Activated B cell treated with CpG ODN at 0.5 μM for 24 hours (primary cell): ENCODE measurements at regions of chr10 and their contacts with region 1.

Region 1: DNA sequence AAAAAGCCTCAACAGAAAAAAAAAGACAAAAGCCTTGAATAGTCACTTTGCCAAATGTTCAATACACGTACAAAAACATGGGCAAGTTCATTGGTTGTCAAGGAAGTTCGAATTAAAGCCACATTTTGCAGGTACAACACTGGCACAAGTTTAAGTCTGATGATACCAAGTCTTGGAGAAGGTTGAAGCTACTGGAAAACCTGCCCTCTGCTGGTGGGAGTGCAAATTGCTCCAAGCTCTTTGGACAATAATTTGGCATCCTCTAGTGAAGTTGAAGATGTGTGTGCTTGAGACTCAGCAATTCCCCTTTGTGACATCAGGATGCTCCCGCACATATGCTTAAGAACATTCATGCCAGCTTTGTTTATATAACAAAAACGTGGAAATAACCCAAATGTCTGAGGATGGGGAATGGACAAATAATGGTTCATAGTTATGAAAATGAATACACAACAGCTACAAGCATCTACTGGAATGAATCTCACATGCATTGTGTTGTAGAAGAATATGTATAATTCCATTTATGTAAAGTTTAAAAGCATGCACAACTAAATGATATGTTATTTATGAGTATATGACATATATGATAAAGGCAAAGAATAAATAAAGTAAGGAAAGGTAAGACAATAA is 120.0 kb upstream of the PLPP4 start:
- DNase-seq: peak; percentile 35
- ATAC-seq: no peak
- H3K4me3 Mint-ChIP-seq: no peak overlapping the region
- H3K27ac Mint-ChIP-seq: no peak overlapping the region
- H3K4me1 Mint-ChIP-seq: no peaks in the 10 kb centered on the region
- H3K27me3 Mint-ChIP-seq: no peaks in the 10 kb centered on the region
- CTCF ChIP-seq: peak; percentile 93

Region 2: DNA sequence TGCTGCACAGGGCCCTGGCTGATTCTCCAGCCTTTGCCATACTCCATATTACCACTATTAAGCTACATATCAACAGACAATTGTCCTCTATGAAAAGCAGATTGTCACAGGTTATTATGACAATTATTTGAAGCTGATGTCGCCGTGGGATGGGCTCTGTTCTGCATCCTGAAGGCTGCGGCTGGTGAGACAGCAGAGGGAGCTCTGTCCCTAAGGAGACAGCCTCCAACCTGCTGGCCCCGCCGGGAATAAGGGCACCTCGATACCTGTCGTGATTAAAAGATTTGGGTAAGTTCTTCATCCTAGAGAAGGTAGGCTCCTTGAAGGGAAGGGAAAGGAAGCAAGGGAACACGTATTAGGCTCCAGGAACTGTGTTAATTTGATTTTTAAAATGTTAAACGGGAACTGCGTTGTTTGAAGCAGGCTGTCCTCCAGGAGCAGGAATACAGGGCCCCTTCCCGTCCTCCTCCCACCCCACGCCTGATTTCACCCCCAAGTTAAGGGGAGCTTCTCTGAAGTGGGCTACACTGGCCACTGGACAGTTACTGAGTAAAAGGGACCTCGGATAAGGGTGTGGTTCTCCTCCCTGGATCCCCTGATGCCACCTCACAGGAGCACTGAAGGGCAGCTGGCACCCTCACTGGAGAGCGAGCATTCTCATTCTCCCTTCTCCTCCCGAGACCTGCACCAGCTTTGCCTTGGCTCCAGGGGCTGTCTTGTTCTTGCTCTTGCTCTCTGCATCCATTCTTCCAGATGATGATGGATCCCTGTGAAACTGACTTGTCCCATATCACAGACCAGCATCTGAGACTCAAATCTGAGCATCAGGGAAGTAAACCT is 728.5 kb before region 1 on chr10:
- CTCF ChIA-PET with region 1: no interaction called
- POLR2A ChIA-PET with region 1: no interaction called
- intact Hi-C with region 1: loop called (anchors 2 kb)
- DNase-seq: no peak
- ATAC-seq: no peak
- H3K4me3 Mint-ChIP-seq: no peak overlapping the region
- H3K27ac Mint-ChIP-seq: no peak overlapping the region
- H3K4me1 Mint-ChIP-seq: peaks cover 3% of the 10 kb centered on the region
- H3K27me3 Mint-ChIP-seq: peaks cover 2% of the 10 kb centered on the region
- CTCF ChIP-seq: no peak

Region 3: GRCh38 chr10:119933179-119933578 is 403.8 kb before region 1 on chr10:
- CTCF ChIA-PET with region 1: no interaction called
- POLR2A ChIA-PET with region 1: no interaction called
- intact Hi-C with region 1: loop called (anchors 5 kb)
- DNase-seq: no peak
- ATAC-seq: no peak
- H3K4me3 Mint-ChIP-seq: no peak overlapping the region
- H3K27ac Mint-ChIP-seq: no peak overlapping the region
- H3K4me1 Mint-ChIP-seq: peaks cover 1% of the 10 kb centered on the region
- H3K27me3 Mint-ChIP-seq: no peaks in the 10 kb centered on the region
- CTCF ChIP-seq: no peak

Region 4: DNA sequence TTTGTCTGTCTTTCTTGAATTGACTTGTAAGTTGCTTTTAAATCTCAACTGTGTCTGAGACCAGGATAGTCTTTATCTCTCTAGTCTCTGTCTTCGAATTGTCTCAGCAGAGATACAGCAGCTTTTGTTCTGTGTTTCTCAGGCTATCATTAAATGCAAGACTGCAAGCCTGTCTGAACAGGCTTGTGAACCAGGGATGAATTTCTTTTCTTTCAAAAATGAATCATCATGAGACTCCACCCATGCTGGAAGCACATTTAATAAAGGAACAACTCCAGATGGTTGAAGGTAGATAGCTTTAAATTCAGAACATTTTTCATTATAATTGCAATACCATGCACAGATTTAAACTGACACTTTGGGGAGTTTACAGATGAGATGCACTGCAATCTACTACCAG is 288.6 kb before region 1 on chr10:
- CTCF ChIA-PET with region 1: no interaction called
- POLR2A ChIA-PET with region 1: no interaction called
- intact Hi-C with region 1: no loop called
- DNase-seq: no peak
- ATAC-seq: no peak
- H3K4me3 Mint-ChIP-seq: no peak overlapping the region
- H3K27ac Mint-ChIP-seq: no peak overlapping the region
- H3K4me1 Mint-ChIP-seq: peaks cover 7% of the 10 kb centered on the region
- H3K27me3 Mint-ChIP-seq: peaks cover 9% of the 10 kb centered on the region
- CTCF ChIP-seq: no peak

Region 5: GRCh38 chr10:120607710-120608703 is 271.0 kb after region 1 on chr10:
- CTCF ChIA-PET with region 1: no interaction called
- POLR2A ChIA-PET with region 1: no interaction called
- intact Hi-C with region 1: no loop called
- DNase-seq: no peak
- ATAC-seq: no peak
- H3K4me3 Mint-ChIP-seq: no peak overlapping the region
- H3K27ac Mint-ChIP-seq: no peak overlapping the region
- H3K4me1 Mint-ChIP-seq: no peaks in the 10 kb centered on the region
- H3K27me3 Mint-ChIP-seq: peaks cover 7% of the 10 kb centered on the region
- CTCF ChIP-seq: no peak

Region 6: DNA sequence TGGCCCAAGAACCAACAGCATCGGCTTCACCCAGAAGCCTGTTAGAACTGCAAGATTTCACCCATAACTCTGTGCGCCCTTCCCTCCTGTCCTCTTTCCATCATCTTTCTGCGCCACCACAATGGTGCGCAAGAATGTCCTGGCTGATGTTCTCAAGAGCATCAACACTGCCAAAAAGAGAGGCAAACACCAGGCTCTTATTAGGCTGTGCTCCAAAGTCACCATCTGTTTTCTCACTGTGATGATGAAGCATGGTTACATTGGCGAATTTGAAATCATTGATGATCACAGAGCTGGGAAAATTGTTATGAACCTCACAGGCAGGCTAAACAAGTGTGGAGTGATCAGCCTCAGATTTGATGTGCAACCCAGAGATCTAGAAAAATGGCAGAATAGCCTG is 1376.5 kb after region 1 on chr10:
- CTCF ChIA-PET with region 1: no interaction called
- POLR2A ChIA-PET with region 1: no interaction called
- intact Hi-C with region 1: no loop called
- DNase-seq: no peak
- ATAC-seq: no peak
- H3K4me3 Mint-ChIP-seq: no peak overlapping the region
- H3K27ac Mint-ChIP-seq: no peak overlapping the region
- H3K4me1 Mint-ChIP-seq: no peaks in the 10 kb centered on the region
- H3K27me3 Mint-ChIP-seq: peaks cover 7% of the 10 kb centered on the region
- CTCF ChIP-seq: no peak